BJ (cell line): ENCODE measurements at regions of chr20 and their contacts with region 1.

Region 1: GRCh38 chr20:31572701-31573554 is 32.2 kb upstream of the ID1 start:
- DNase-seq: peak; percentile 93
- H3K4me3 ChIP-seq: peak overlapping the region; percentile 50
- H3K27me3 ChIP-seq: no peaks in the 10 kb centered on the region
- CTCF ChIP-seq: no peak

Region 2: GRCh38 chr20:31485450-31486339 is 87.2 kb before region 1 on chr20:
- CTCF ChIA-PET with region 1: no interaction called
- POLR2A ChIA-PET with region 1: no interaction called
- DNase-seq: no peak
- H3K4me3 ChIP-seq: no peak overlapping the region
- H3K27me3 ChIP-seq: peaks cover 2% of the 10 kb centered on the region; the same call in 1 of the 2 replicates
- CTCF ChIP-seq: no peak

Region 3: GRCh38 chr20:31587545-31588389 is 14.8 kb after region 1 on chr20:
- CTCF ChIA-PET with region 1: interaction called, 7 read pairs
- POLR2A ChIA-PET with region 1: interaction called, 10 read pairs
- DNase-seq: no peak
- H3K4me3 ChIP-seq: peak overlapping the region; percentile 44
- H3K27me3 ChIP-seq: no peaks in the 10 kb centered on the region
- CTCF ChIP-seq: no peak

Region 4: DNA sequence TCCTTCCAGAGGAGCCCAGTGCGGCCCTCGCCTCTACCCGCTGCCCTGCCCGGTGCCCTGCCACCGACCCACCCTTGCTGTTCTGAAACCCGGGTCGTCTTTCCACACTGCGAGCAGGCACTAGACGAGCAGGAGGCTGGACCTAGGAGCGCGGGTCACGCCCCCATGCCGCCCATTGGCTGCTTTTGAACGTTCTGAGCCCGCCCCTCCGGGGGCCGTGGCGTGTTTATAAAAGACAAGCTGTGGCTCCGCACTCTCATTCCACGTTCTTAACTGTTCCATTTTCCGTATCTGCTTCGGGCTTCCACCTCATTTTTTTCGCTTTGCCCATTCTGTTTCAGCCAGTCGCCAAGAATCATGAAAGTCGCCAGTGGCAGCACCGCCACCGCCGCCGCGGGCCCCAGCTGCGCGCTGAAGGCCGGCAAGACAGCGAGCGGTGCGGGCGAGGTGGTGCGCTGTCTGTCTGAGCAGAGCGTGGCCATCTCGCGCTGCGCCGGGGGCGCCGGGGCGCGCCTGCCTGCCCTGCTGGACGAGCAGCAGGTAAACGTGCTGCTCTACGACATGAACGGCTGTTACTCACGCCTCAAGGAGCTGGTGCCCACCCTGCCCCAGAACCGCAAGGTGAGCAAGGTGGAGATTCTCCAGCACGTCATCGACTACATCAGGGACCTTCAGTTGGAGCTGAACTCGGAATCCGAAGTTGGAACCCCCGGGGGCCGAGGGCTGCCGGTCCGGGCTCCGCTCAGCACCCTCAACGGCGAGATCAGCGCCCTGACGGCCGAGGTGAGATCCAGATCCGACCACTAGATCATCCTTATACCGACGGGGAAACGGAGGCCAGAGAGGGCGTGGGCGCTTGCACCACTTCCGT is 32.3 kb after region 1 on chr20 and contains the start of gene ID1:
- CTCF ChIA-PET with region 1: interaction called, 454 read pairs
- POLR2A ChIA-PET with region 1: interaction called, 9 read pairs
- DNase-seq: peak; percentile 70
- H3K4me3 ChIP-seq: peak within 1 kb of the TSS; percentile 76
- H3K27me3 ChIP-seq: no peaks in the 10 kb centered on the region
- CTCF ChIP-seq: no peak
- polyA plus RNA-seq, gene ID1: 126 and 135 TPM in 2 replicates

Region 5: GRCh38 chr20:31751126-31751525 is 178.2 kb after region 1 on chr20:
- CTCF ChIA-PET with region 1: no interaction called
- POLR2A ChIA-PET with region 1: interaction called, 25 read pairs
- DNase-seq: peak; percentile 84
- H3K4me3 ChIP-seq: no peak overlapping the region
- H3K27me3 ChIP-seq: no peaks in the 10 kb centered on the region
- CTCF ChIP-seq: no peak

Region 6: DNA sequence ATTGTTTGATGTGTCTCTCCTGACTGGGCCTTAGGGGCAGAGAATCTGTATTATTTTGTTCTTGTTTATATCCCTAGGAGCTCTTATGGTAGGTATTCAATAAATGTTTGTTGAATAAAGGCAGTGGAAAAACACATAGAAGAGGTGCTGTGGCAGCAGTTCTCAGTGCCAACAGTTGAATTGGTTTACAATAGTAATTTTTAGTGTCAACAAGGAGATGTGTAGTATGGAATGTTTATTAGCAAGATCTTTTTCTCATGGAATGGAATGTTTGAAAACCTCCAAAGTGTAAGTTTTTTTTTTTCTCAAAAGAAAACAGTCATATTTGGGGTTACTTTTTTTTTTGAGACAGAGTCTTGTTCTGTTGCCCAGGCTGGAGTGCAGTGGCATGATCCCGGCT is 813.2 kb after region 1 on chr20:
- CTCF ChIA-PET with region 1: no interaction called
- POLR2A ChIA-PET with region 1: no interaction called
- DNase-seq: no peak
- H3K4me3 ChIP-seq: no peak overlapping the region
- H3K27me3 ChIP-seq: no peaks in the 10 kb centered on the region
- CTCF ChIP-seq: no peak